B cell (primary cell): ENCODE measurements at regions of chr5 and their contacts with region 1.

Region 1: DNA sequence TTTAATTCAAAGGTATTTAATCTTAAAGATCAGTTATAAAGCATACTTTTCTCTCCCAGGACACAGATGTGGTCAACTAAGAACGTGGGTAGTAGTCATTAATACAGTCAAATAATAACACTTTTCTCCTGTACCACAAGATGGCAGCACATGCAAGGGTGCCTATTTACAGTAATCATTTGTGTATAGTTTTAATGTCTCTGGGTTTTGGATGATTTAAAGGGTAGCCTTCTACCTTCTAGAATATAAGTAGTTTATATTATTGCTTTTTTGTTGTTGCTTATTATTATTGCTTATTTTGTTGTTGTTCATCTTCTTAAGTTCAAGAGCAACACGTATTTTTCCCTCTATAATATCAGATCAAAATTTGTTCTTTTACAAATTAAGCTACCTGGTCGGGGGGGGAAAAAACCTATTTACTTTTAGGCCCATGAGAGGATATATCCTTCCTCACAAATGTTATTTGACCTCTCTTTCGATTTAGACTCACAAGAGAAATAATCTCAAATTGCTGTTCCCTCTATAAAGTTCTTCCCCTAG is 59.6 kb upstream of the SLC27A6 start:
- DNase-seq: peak; percentile 53
- ATAC-seq: peak; percentile 47
- H3K4me3 ChIP-seq: no peak overlapping the region
- H3K4me3 Mint-ChIP-seq: no peak overlapping the region
- H3K27ac ChIP-seq: no peak overlapping the region
- H3K27ac Mint-ChIP-seq: no peak overlapping the region
- H3K4me1 ChIP-seq: no peaks in the 10 kb centered on the region
- H3K4me1 Mint-ChIP-seq: no peaks in the 10 kb centered on the region
- H3K27me3 ChIP-seq: no peaks in the 10 kb centered on the region
- H3K27me3 Mint-ChIP-seq: no peaks in the 10 kb centered on the region
- CTCF ChIP-seq: peak; percentile 86

Region 2: GRCh38 chr5:129135633-129136032 is 230.0 kb after region 1 on chr5:
- CTCF ChIA-PET with region 1: interaction called, 4 read pairs
- POLR2A ChIA-PET with region 1: no interaction called
- intact Hi-C with region 1: loop called (anchors 2 kb)
- DNase-seq: peak; percentile 11
- ATAC-seq: no peak
- H3K4me3 ChIP-seq: no peak overlapping the region
- H3K4me3 Mint-ChIP-seq: no peak overlapping the region
- H3K27ac ChIP-seq: no peak overlapping the region
- H3K27ac Mint-ChIP-seq: no peak overlapping the region
- H3K4me1 ChIP-seq: no peaks in the 10 kb centered on the region
- H3K4me1 Mint-ChIP-seq: no peaks in the 10 kb centered on the region
- H3K27me3 ChIP-seq: no peaks in the 10 kb centered on the region
- H3K27me3 Mint-ChIP-seq: no peaks in the 10 kb centered on the region
- CTCF ChIP-seq: no peak